ENCODE measurements at regions of chr11 and their contacts with region 1.

Region 1: DNA sequence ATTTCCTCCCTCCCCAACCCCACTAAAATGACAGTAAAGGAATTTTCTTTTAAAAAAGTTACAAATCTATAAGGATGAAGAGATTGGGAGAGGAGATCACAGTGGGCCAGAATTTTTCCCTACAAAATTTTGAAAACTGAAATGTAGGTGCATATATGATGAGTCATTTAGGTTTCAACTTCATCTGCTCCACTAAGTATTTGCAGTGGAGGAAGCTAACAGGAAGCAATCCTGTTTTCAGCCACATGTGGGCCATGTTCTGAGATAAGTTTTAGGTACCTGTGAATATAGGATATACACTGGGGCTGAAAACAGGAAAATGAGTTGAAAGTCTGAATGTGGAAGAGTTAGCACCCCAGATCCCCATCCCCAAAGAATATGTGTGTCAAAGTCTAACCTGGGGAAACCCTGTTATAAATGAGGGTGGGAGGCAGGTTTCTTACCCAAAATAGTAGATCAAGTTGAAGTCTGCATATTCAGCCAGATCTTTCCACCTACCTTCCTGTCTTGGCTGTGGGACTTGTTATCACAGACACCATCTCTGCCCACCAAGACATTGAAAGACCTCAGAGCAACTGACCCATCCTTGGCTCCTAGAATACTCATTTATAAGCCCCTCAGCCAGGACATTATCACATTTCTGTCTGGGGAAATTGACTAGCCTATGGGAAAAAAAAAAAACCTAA is 87.2 kb downstream of the PACS1 start:
- DNase-seq: no peak
- H3K4me3 ChIP-seq: no peak overlapping the region
- H3K27ac ChIP-seq: no peak overlapping the region
- H3K4me1 ChIP-seq: peaks cover 11% of the 10 kb centered on the region
- CTCF ChIP-seq: no peak

Region 2: GRCh38 chr11:66035653-66036333 is 121.5 kb before region 1 on chr11:
- CTCF ChIA-PET with region 1: no interaction called
- POLR2A ChIA-PET with region 1: no interaction called
- intact Hi-C with region 1: no loop called
- DNase-seq: no peak
- H3K4me3 ChIP-seq: no peak overlapping the region
- H3K27ac ChIP-seq: no peak overlapping the region
- H3K4me1 ChIP-seq: peaks cover 7% of the 10 kb centered on the region
- CTCF ChIP-seq: no peak

Region 3: DNA sequence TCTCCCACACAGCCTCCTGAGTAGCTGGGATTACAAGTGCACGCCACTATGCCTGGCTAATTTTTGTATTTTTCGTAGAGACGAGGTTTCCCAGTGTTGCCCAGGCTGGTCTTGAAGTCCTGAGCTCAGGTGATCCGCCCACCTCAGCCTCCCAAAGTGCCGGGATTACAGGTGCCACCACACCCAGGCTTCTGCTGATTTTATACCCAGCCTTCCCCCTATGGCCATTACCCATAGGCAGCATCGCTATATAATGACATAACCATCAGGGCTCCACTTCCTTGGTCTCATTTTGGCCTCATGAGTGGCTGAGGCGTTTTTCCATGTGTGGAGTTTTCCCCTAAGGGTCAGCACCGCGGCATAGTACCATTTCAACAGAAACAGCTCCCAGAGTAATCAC is 50.6 kb after region 1 on chr11:
- CTCF ChIA-PET with region 1: no interaction called
- POLR2A ChIA-PET with region 1: no interaction called
- intact Hi-C with region 1: loop called (anchors 10 kb)
- DNase-seq: no peak
- H3K4me3 ChIP-seq: no peak overlapping the region
- H3K27ac ChIP-seq: no peak overlapping the region
- H3K4me1 ChIP-seq: no peaks in the 10 kb centered on the region
- CTCF ChIP-seq: no peak

Region 4: DNA sequence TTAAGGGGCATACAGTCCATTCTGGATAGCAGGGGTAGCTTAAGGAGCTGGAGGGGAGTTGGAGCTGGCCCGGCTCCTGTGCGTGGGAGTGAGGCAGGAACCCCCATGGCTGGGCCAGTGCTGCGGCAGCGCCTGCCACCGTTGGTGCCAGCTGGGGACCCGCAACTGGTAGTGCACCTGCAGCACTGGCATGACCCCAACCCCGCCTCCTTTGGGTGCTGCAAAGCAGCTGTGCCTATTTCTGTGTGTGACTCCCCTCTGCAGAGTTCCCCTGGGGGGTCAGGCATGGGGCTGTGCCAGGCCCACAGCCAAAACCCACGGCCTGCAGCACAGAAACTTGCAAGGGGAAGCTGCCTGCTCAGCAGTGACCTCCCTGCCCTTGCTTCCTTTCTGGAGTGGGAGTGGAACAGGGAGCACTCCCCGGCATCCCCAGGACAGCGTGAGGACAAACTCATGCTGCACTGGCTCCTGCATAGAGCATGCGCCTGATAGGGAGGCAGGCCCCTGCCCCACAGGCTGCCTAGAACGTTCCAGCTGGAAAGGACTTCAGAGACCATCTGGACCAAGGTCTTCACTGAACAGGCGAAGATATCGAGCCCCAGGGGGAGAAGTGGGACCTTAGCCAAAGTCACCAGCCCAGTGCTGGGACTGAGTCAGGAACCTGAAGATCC is 84.9 kb after region 1 on chr11:
- CTCF ChIA-PET with region 1: no interaction called
- POLR2A ChIA-PET with region 1: no interaction called
- intact Hi-C with region 1: no loop called
- DNase-seq: no peak
- H3K4me3 ChIP-seq: no peak overlapping the region
- H3K27ac ChIP-seq: no peak overlapping the region
- H3K4me1 ChIP-seq: no peaks in the 10 kb centered on the region
- CTCF ChIP-seq: no peak